Ovary (tissue), 10 donors: ENCODE measurements at regions of chr15 and their contacts with region 1.

Region 1: GRCh38 chr15:41169781-41170180 is 53.7 kb upstream of the INO80 start:
- DNase-seq: no peak
- H3K4me3 ChIP-seq: no peak overlapping the region
- H3K27ac ChIP-seq: no peak overlapping the region
- H3K4me1 ChIP-seq: no peaks in the 10 kb centered on the region
- H3K27me3 ChIP-seq: no peaks in the 10 kb centered on the region
- CTCF ChIP-seq: no peak
- EP300 ChIP-seq: no peak
- POLR2A ChIP-seq: no peak

Region 2: GRCh38 chr15:41462084-41462795 is 292.5 kb after region 1 on chr15:
- intact Hi-C with region 1: loop called in 1 of 4 experiments (anchors 10 kb)
- DNase-seq: no peak
- H3K4me3 ChIP-seq: no peak overlapping the region
- H3K27ac ChIP-seq: no peak overlapping the region
- H3K4me1 ChIP-seq: no peaks in the 10 kb centered on the region
- H3K27me3 ChIP-seq: no peaks in the 10 kb centered on the region
- CTCF ChIP-seq: no peak
- EP300 ChIP-seq: no peak
- POLR2A ChIP-seq: no peak

Region 3: GRCh38 chr15:41512940-41513510 is 343.2 kb after region 1 on chr15:
- intact Hi-C with region 1: no loop called
- DNase-seq: peak in 2 of 5 donors; percentile 24 to 42
- H3K4me3 ChIP-seq: peak overlapping the region; percentile 4
- H3K27ac ChIP-seq: no peak overlapping the region
- H3K4me1 ChIP-seq: peaks cover 20% of the 10 kb centered on the region
- H3K27me3 ChIP-seq: no peaks in the 10 kb centered on the region
- CTCF ChIP-seq: no peak
- EP300 ChIP-seq: no peak
- POLR2A ChIP-seq: no peak